IMR-90 (cell line): ENCODE measurements at regions of chr10 and their contacts with region 1.

Region 1: GRCh38 chr10:102583435-102584417 is 60.6 kb upstream of the TRIM8 start:
- DNase-seq: peak; percentile 91
- ATAC-seq: peak; percentile 93
- H3K4me3 ChIP-seq: no peak overlapping the region
- H3K27ac ChIP-seq: no peak overlapping the region
- H3K4me1 ChIP-seq: peaks cover 21% of the 10 kb centered on the region
- H3K27me3 ChIP-seq: no peaks in the 10 kb centered on the region
- CTCF ChIP-seq: peak; percentile 90
- POLR2A ChIP-seq: no peak
- RAD21 ChIP-seq: peak; percentile 93

Region 2: GRCh38 chr10:101671453-101671852 is 912.3 kb before region 1 on chr10:
- CTCF ChIA-PET with region 1: no interaction called
- POLR2A ChIA-PET with region 1: no interaction called
- dilution Hi-C with region 1: no loop called
- in situ Hi-C with region 1: no loop called
- intact Hi-C with region 1: no loop called
- DNase-seq: no peak
- ATAC-seq: no peak
- H3K4me3 ChIP-seq: no peak overlapping the region
- H3K27ac ChIP-seq: no peak overlapping the region
- H3K4me1 ChIP-seq: peaks cover 3% of the 10 kb centered on the region; the same call in 1 of the 2 replicates
- H3K27me3 ChIP-seq: no peaks in the 10 kb centered on the region
- CTCF ChIP-seq: no peak
- POLR2A ChIP-seq: no peak
- RAD21 ChIP-seq: no peak

Region 3: DNA sequence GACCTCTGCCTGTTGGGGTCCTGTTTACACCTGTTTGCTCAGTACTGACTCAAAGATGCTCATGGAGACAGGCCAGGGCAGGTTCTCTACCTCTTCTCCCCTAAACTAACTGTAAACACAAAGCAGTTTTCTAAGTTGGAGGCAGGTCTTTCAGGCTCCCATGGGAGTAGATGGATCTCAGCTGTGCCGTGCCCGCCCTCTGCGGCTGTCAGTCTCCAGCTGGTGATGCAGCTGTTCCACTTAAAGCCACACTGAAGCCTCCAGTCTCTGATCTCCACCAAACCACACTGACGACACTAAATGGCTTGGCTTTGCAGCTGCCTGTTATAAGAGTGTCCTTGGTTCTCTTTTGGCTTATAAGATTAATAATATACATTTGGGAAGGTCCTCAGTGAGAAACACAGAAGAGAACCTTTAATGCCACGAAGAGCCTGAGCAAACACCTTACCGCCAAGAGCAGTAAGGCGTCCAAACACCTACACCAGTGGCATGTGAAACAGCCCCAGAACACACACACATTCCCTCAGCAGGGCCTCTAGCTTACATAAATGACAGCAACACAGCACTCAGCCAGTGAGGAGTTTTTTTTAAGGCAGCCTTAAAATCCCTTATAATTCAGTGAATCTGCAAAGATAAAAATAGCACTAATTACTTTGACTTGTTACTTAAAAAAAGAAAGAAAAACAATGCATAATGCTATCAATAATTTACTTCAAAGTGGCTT is 679.7 kb before region 1 on chr10:
- CTCF ChIA-PET with region 1: no interaction called
- POLR2A ChIA-PET with region 1: no interaction called
- dilution Hi-C with region 1: no loop called
- in situ Hi-C with region 1: no loop called
- intact Hi-C with region 1: no loop called
- DNase-seq: peak; percentile 21
- ATAC-seq: no peak
- H3K4me3 ChIP-seq: no peak overlapping the region
- H3K27ac ChIP-seq: no peak overlapping the region
- H3K4me1 ChIP-seq: no peaks in the 10 kb centered on the region
- H3K27me3 ChIP-seq: no peaks in the 10 kb centered on the region
- CTCF ChIP-seq: no peak
- POLR2A ChIP-seq: no peak
- RAD21 ChIP-seq: no peak

Region 4: GRCh38 chr10:102399217-102400089 is 184.3 kb before region 1 on chr10:
- CTCF ChIA-PET with region 1: interaction called, 3 read pairs
- POLR2A ChIA-PET with region 1: no interaction called
- dilution Hi-C with region 1: no loop called
- in situ Hi-C with region 1: no loop called
- intact Hi-C with region 1: loop called (anchors 5 kb)
- DNase-seq: peak; percentile 82
- ATAC-seq: peak; percentile 76
- H3K4me3 ChIP-seq: peak overlapping the region; percentile 39
- H3K27ac ChIP-seq: peak overlapping the region; percentile 46
- H3K4me1 ChIP-seq: peaks cover 17% of the 10 kb centered on the region
- H3K27me3 ChIP-seq: no peaks in the 10 kb centered on the region
- CTCF ChIP-seq: peak; percentile 95
- POLR2A ChIP-seq: no peak
- RAD21 ChIP-seq: peak; percentile 68

Region 5: DNA sequence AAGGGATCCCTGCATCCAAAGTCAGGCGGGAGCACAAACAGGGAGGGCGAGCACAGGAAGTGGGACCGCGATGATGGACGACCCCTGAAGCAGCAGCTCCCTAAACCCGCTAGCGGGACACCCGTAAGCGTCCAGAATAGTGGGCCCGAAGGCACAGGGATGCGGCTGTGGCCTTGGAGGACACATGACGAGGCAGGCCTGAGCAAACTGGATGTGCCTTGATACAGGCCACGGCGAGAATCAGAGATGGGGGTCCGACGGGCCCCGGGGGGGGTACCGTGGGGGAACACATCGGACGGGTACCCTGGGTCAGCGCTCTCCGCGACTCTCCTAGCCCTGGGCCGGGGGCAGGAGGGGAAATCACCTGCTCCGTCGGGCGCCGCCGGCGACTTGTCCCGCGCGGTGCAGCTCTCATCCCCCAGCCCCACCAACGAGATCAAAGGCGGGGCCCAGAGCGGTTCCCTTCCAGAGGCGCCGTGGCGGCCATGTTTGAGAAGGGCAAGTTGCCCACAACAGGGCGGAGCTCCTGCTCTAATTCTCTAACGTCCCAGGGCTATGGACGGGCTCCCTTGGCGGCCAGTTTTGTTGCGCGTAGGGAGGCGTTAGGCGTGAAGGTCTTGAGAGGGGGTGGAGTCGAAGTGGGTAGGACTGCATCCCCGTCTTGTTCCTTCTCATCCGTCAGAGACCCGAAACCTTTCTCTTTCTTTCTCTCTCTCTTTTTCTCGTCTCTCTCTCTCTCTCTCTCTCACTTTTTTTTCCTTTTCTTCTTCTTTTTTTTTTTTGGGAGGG is 151.4 kb before region 1 on chr10 and contains the start of gene CUEDC2:
- CTCF ChIA-PET with region 1: no interaction called
- POLR2A ChIA-PET with region 1: no interaction called
- dilution Hi-C with region 1: no loop called
- in situ Hi-C with region 1: no loop called
- intact Hi-C with region 1: loop called (anchors 1 kb)
- DNase-seq: peak; percentile 94
- ATAC-seq: peak; percentile 95
- H3K4me3 ChIP-seq: peak within 1 kb of the TSS; percentile 70
- H3K27ac ChIP-seq: peak within 1 kb of the TSS; percentile 85
- H3K4me1 ChIP-seq: peaks cover 13% of the 10 kb centered on the region
- H3K27me3 ChIP-seq: no peaks in the 10 kb centered on the region
- CTCF ChIP-seq: 0 out of 2 replicates have a peak, but pooled peaks have one; percentile 5
- POLR2A ChIP-seq: peak; percentile 62; the same call in 1 of the 2 replicates
- RAD21 ChIP-seq: no peak
- total RNA-seq, gene CUEDC2: 43.6 and 55.7 TPM in 2 replicates

Region 6: DNA sequence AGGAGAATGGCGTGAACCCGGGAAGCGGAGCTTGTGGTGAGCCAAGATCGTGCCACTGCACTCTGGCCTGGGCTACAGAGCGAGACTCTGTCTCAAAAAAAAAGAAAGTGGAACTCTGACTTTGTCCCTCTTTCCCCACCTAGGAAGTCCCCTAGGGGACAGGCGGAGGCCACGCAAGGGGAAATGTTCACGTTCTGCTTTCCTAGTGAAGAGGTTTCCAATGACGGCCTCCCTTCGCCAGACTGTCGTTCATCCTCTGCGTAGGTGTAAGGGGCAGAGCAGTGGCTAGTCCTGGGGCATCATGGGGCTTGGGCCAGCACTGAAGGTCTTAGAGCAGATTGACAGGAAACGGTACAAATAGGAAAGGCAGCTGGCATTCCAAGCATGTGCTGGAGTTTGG is 49.4 kb before region 1 on chr10:
- CTCF ChIA-PET with region 1: no interaction called
- POLR2A ChIA-PET with region 1: no interaction called
- dilution Hi-C with region 1: no loop called
- in situ Hi-C with region 1: no loop called
- intact Hi-C with region 1: no loop called
- DNase-seq: no peak
- ATAC-seq: no peak
- H3K4me3 ChIP-seq: no peak overlapping the region
- H3K27ac ChIP-seq: no peak overlapping the region
- H3K4me1 ChIP-seq: no peaks in the 10 kb centered on the region
- H3K27me3 ChIP-seq: no peaks in the 10 kb centered on the region
- CTCF ChIP-seq: no peak
- POLR2A ChIP-seq: no peak
- RAD21 ChIP-seq: no peak